ENCODE measurements at regions of chr20 and their contacts with region 1.

Region 1: DNA sequence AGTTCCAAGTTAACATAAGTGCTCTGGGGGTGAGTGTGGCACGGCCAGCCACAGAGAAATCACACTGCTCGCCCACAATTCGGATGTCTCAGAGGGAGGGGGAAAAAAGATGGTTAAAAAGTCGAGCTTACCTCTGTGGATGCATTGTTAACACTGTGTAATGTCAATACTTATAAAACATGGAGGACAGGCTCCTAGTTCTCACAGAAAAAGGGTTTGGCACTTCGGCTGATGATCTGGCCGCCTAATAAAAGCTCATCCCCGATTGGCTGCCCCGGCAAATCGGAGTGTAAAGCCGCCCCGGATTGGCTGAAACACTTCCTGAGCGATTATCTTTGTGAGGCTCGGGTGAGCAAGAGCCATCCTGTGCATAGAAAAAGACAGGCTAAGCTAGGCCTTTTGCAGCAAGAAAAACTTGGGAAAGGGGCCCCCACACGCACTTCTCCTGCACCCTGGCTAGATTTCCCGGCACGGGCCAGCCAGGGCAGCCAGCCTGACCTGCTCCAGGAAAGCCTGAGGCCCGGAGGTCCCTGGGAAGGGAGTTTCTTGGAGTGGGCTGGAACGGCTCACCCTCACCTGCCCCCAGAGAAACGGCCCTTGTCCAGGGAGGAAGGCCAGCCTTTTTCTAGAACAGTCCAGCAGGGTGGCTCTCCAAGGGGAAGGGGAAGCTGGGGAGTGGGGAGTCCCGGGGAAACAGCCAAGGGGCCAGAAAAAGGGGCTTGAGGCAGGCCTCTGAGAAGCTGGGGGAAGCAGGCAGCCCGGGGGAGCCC is at the start of gene ZMYND8:
- DNase-seq: peak; percentile 90

Region 2: GRCh38 chr20:47272893-47273590 is 83.7 kb before region 1 on chr20:
- CTCF ChIA-PET with region 1: interaction called, 8 read pairs
- POLR2A ChIA-PET with region 1: interaction called, 10 read pairs
- DNase-seq: peak; percentile 66

Region 3: GRCh38 chr20:47317127-47317895 is 39.4 kb before region 1 on chr20:
- CTCF ChIA-PET with region 1: no interaction called
- POLR2A ChIA-PET with region 1: interaction called, 20 read pairs
- DNase-seq: no peak

Region 4: DNA sequence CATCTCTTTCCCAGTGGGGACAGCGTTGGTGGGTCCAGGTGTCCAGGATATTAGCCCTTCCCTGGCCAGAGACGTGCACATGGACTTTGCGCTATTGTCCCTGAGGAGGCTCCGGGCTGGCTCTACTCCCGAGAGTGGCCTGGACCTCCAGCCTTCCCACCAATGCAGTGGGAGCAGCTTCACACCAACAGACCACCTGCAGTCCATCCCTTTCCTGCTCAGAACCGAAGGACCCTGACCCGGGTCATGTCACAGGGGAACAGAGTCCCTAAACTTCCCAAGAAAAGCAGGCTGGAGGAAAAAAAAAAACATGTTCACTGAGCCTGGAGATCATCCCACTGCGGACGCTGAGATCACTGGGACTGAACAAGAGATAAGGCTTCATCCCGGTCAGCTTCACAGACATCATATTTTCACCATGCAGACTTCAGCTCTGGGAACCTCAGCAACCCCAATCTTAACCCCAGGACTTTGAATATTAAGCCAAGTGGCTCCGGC is 18.5 kb before region 1 on chr20:
- CTCF ChIA-PET with region 1: interaction called, 4 read pairs
- POLR2A ChIA-PET with region 1: interaction called, 14 read pairs
- DNase-seq: no peak

Region 5: GRCh38 chr20:47370850-47371676 is 14.4 kb after region 1 on chr20:
- CTCF ChIA-PET with region 1: no interaction called
- POLR2A ChIA-PET with region 1: interaction called, 18 read pairs
- DNase-seq: no peak

Region 6: DNA sequence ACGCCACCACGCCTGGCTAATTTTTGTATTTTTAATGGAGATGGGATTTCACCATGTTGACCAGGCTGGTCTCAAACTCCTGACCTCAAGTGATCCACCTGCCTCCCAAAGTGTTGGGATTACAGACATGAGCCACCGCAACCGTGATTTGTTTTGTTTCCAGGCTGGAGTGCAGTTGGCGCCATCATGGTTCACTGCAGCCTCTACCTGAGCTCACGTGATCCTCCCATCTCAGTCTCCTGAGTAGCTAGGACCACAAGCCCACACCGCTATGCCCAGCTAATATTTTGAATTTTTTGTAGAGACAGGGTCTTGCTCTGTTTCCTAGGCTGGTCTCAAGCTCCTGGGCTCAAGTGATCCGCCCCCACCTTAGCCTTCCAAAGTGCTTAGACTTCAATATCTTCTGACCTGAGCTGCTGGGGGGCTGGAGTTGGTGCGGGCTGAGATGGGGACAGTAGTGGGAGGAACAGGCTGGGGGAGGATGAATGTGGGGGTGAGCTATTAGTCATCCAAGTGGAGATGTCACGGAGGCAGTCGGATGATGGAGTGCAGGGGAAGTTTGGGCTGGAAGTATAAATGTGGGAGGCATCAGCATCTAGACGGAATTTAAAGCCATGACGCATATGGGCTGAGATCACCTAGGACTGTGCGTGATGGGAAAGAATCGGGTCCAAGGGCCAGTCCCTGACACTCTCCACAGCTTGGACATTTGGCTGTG is 22.9 kb after region 1 on chr20:
- CTCF ChIA-PET with region 1: interaction called, 3 read pairs
- POLR2A ChIA-PET with region 1: interaction called, 10 read pairs
- DNase-seq: no peak

Region 7: GRCh38 chr20:47389867-47390347 is 33.2 kb after region 1 on chr20:
- CTCF ChIA-PET with region 1: interaction called, 5 read pairs
- POLR2A ChIA-PET with region 1: interaction called, 10 read pairs
- DNase-seq: no peak

Measured in HEK293T (cell line).